ENCODE measurements at regions of chr10 and their contacts with region 1.

Region 1: DNA sequence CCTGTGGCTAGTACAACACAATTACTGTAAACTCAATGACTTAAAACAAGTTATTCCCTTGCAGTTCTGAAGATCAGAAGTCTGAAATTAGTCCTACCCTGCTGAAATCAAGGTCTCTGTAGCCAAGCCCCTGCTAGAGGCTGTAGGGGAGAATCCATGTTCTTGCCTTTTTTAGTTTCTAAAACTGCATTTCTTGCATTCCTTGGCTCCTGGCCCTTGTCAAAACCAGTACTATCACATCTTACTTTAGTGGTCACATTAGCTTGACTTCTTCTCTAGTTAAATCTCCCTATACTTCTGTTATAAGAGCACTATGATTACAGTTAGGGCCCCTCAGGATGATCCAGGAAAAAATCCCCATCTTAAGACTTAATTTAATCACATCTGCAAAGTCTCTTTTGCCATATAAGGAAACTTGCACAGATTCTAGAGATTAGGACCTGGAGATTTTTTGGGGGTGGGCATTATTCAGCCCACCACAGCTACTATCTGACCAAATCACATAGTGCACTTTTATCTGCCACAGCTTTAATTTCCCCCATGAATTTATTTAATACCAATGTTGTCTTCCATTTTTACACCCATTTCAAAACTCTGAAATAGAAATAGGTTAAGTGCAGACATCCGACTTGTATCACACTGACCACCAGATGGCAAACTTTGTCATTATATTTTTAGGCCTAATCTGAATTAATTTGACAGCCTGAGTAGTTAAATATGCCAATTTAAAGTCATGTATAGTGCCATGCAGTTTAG is 566.8 kb downstream of the GFRA1 start:
- DNase-seq: no peak
- ATAC-seq: no peak
- H3K4me3 ChIP-seq: no peak overlapping the region
- H3K27ac ChIP-seq: no peak overlapping the region
- H3K4me1 ChIP-seq: no peaks in the 10 kb centered on the region
- H3K27me3 ChIP-seq: no peaks in the 10 kb centered on the region
- CTCF ChIP-seq: peak; percentile 46

Region 2: DNA sequence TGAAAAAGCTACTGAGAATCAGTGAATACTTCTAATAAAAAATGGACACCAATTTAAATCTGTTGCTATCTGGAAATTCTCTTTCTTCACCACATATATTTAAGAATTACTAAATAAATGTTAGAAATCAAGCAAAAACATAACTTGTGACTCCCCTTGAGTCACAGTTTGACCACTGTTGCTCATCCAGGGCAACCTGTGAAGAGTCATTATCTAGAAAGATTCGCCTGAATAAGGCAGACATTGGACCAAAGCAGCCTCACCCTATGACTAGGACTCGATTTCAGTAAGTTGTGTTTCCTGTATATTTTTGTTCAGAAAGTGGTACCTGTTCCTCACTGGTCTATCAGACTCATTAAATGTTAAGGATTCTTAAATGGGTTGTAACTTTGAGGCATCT is 40.7 kb before region 1 on chr10:
- intact Hi-C with region 1: loop called (anchors 2 kb)
- DNase-seq: no peak
- ATAC-seq: no peak
- H3K4me3 ChIP-seq: no peak overlapping the region
- H3K27ac ChIP-seq: no peak overlapping the region
- H3K4me1 ChIP-seq: no peaks in the 10 kb centered on the region
- H3K27me3 ChIP-seq: no peaks in the 10 kb centered on the region
- CTCF ChIP-seq: no peak